ENCODE measurements at regions of chr17 and their contacts with region 1.

Region 1: GRCh38 chr17:77429919-77430752 is 289.4 kb downstream of the SEC14L1 start:
- DNase-seq: peak; percentile 82
- ATAC-seq: peak; percentile 32
- H3K4me3 ChIP-seq: no peak overlapping the region
- H3K4me3 Mint-ChIP-seq: peak overlapping the region; percentile 61
- H3K27ac ChIP-seq: peak overlapping the region in 1 of 2 donors; percentile 43
- H3K27ac Mint-ChIP-seq: peak overlapping the region; percentile 81
- H3K4me1 ChIP-seq: peaks cover 100% of the 10 kb centered on the region in 2 donors
- H3K4me1 Mint-ChIP-seq: peaks cover 86% of the 10 kb centered on the region
- H3K27me3 ChIP-seq: no peaks in the 10 kb centered on the region
- H3K27me3 Mint-ChIP-seq: no peaks in the 10 kb centered on the region
- CTCF ChIP-seq: peak; percentile 87

Region 2: DNA sequence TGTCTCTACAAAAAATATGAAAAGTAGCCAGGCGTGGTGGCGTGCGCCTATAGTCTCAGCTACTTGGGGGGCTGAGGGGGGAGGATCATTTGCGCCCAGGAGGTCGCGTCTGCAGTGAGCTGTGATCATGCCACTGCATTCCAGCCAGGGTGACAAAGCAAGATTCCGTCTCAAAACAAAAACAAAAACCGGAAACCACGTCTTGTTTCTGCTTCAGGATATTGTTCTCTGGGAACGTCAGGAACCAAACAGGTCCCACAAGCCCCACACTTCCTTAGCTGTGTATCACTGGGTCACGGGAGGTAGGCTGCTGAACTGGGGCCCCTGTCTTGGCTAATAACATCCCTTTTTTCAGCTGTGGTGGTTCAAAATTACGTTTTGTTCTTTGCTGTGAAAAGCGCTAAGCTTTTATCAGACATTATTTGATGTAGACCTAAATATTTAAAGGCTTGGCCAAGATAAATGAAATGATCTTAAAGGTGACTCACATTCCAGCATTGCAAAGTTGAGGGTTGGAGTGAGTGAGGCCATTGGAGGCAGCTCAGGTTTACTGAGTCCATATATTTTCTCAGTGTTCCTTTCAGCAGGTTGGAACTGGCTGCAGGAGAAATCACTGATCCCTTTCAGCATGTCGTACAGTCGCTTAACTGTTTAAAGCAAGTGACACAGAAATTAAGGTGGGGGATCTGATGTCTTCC is 305.8 kb before region 1 on chr17:
- CTCF ChIA-PET with region 1: no interaction called
- POLR2A ChIA-PET with region 1: no interaction called
- intact Hi-C with region 1: no loop called
- DNase-seq: no peak
- ATAC-seq: no peak
- H3K4me3 ChIP-seq: no peak overlapping the region
- H3K4me3 Mint-ChIP-seq: no peak overlapping the region
- H3K27ac ChIP-seq: no peak overlapping the region
- H3K27ac Mint-ChIP-seq: no peak overlapping the region
- H3K4me1 ChIP-seq: peaks cover 4 to 8% of the 10 kb centered on the region in 2 donors
- H3K4me1 Mint-ChIP-seq: peaks cover 8% of the 10 kb centered on the region
- H3K27me3 ChIP-seq: peaks cover 0 to 7% (median 0%) of the 10 kb centered on the region in 4 experiments
- H3K27me3 Mint-ChIP-seq: peaks cover 8% of the 10 kb centered on the region
- CTCF ChIP-seq: no peak

Region 3: GRCh38 chr17:77325577-77326075 is 104.5 kb before region 1 on chr17:
- CTCF ChIA-PET with region 1: interaction called, 64 read pairs
- POLR2A ChIA-PET with region 1: interaction called, 6 read pairs
- intact Hi-C with region 1: loop called (anchors 2 kb)
- DNase-seq: no peak
- ATAC-seq: peak; percentile 10
- H3K4me3 ChIP-seq: no peak overlapping the region
- H3K4me3 Mint-ChIP-seq: peak overlapping the region; percentile 93
- H3K27ac ChIP-seq: peak overlapping the region; percentile 82 to 87
- H3K27ac Mint-ChIP-seq: peak overlapping the region; percentile 90
- H3K4me1 ChIP-seq: peaks cover 72 to 94% of the 10 kb centered on the region in 2 donors
- H3K4me1 Mint-ChIP-seq: peaks cover 82% of the 10 kb centered on the region
- H3K27me3 ChIP-seq: no peaks in the 10 kb centered on the region
- H3K27me3 Mint-ChIP-seq: no peaks in the 10 kb centered on the region
- CTCF ChIP-seq: no peak

Region 4: GRCh38 chr17:77410470-77410869 is 19.7 kb before region 1 on chr17:
- CTCF ChIA-PET with region 1: interaction called, 699 read pairs
- POLR2A ChIA-PET with region 1: interaction called, 47 read pairs
- intact Hi-C with region 1: loop called (anchors 1 kb)
- DNase-seq: no peak
- ATAC-seq: no peak
- H3K4me3 ChIP-seq: no peak overlapping the region
- H3K4me3 Mint-ChIP-seq: peak overlapping the region; percentile 40
- H3K27ac ChIP-seq: peak overlapping the region; percentile 7 to 49
- H3K27ac Mint-ChIP-seq: peak overlapping the region; percentile 79
- H3K4me1 ChIP-seq: peaks cover 64 to 78% of the 10 kb centered on the region in 2 donors
- H3K4me1 Mint-ChIP-seq: peaks cover 69% of the 10 kb centered on the region
- H3K27me3 ChIP-seq: no peaks in the 10 kb centered on the region
- H3K27me3 Mint-ChIP-seq: no peaks in the 10 kb centered on the region
- CTCF ChIP-seq: no peak

Region 5: GRCh38 chr17:77451245-77451893 is 21.2 kb after region 1 on chr17:
- CTCF ChIA-PET with region 1: interaction called, 65 read pairs
- POLR2A ChIA-PET with region 1: interaction called, 147 read pairs
- intact Hi-C with region 1: no loop called
- DNase-seq: peak; percentile 70
- ATAC-seq: peak; percentile 59
- H3K4me3 ChIP-seq: peak overlapping the region; percentile 91 to 96 (median 92)
- H3K4me3 Mint-ChIP-seq: peak overlapping the region; percentile 93
- H3K27ac ChIP-seq: peak overlapping the region; percentile 66 to 96
- H3K27ac Mint-ChIP-seq: peak overlapping the region; percentile 96
- H3K4me1 ChIP-seq: peaks cover 67 to 86% of the 10 kb centered on the region in 2 donors
- H3K4me1 Mint-ChIP-seq: peaks cover 69% of the 10 kb centered on the region
- H3K27me3 ChIP-seq: no peaks in the 10 kb centered on the region
- H3K27me3 Mint-ChIP-seq: no peaks in the 10 kb centered on the region
- CTCF ChIP-seq: no peak

Region 6: DNA sequence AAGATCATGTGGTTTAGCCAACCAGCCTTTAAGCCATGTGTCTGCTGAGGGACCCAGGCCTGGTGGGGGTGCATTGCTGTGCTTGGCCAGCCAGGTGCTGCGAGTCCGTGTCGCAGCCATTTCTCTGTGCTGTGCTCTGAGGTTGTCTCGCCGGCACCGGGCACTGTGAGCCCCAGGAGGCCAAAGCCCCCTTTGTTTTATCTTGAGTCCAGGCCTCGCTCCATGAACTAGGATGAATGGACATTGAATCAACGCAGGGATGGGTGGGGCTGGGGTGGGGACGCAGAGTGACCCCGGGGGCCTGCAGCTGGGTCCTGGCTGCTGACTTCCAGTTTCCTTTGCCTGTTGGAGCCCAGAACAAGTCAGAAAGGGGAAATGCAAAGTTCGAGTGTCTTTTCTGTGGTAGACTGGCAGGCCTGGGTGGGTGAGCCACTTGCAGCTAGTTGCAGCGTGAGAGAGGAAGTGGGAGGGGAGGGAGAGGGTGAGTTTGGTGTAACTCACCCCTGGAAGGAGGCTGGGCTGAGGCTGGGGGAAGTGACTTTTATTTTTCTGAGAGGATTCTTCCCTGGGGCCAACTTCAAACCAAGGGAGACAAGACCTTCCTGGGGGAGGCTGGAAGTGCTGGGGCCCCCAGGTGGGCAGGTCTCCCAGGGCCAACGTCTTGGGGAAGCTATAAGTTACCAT is 35.4 kb after region 1 on chr17:
- CTCF ChIA-PET with region 1: interaction called, 18 read pairs
- POLR2A ChIA-PET with region 1: interaction called, 12 read pairs
- intact Hi-C with region 1: loop called (anchors 1 kb)
- DNase-seq: peak; percentile 94
- ATAC-seq: peak; percentile 78
- H3K4me3 ChIP-seq: peak overlapping the region; percentile 12 to 56 (median 38)
- H3K4me3 Mint-ChIP-seq: peak overlapping the region; percentile 81
- H3K27ac ChIP-seq: peak overlapping the region; percentile 55 to 89
- H3K27ac Mint-ChIP-seq: peak overlapping the region; percentile 95
- H3K4me1 ChIP-seq: peaks cover 90 to 98% of the 10 kb centered on the region in 2 donors
- H3K4me1 Mint-ChIP-seq: peaks cover 86% of the 10 kb centered on the region
- H3K27me3 ChIP-seq: no peaks in the 10 kb centered on the region
- H3K27me3 Mint-ChIP-seq: no peaks in the 10 kb centered on the region
- CTCF ChIP-seq: no peak

Region 7: DNA sequence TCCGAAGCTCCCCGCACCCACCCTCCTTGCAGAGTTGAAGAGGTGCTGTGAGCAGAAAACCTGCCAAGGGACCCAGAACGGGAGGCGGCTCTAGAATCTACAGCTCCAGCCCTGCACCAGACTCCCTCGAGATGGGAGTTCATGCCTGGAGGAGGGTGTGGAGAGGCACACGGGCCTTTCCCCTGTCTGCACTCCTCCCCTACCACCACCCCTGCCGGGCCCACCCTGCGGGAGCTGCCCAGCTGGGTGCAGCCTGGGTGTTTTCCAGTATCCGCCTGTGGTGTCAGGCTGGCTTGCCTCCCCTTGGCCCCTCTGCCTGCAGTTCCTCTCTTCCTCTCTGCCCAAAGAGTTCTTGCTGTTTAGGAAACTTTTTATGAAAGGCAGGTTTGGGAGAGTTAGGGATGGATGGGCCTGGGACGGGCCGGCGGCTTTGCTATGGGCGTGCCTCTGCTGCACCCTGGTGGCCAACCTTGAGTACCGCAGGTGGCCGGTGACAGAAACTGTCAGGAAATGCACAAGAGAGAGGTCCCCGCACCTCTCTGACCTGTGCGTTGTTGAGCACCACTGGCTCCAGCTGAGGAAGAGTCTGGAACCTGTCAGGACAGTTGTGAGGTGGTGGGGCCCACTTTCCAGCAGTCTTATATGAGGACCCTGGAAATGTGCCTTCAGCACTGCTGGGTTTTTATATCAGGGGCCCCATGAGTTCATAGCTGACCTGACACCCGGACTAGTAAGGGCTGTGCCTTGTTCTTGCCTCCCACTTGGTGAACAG is 64.7 kb after region 1 on chr17:
- CTCF ChIA-PET with region 1: interaction called, 206 read pairs
- POLR2A ChIA-PET with region 1: interaction called, 24 read pairs
- intact Hi-C with region 1: loop called (anchors 1 kb)
- DNase-seq: peak; percentile 86
- ATAC-seq: peak; percentile 74
- H3K4me3 ChIP-seq: no peak overlapping the region
- H3K4me3 Mint-ChIP-seq: peak overlapping the region; percentile 44
- H3K27ac ChIP-seq: peak overlapping the region; percentile 28
- H3K27ac Mint-ChIP-seq: peak overlapping the region; percentile 90
- H3K4me1 ChIP-seq: peaks cover 14 to 43% of the 10 kb centered on the region in 2 donors
- H3K4me1 Mint-ChIP-seq: peaks cover 32% of the 10 kb centered on the region
- H3K27me3 ChIP-seq: no peaks in the 10 kb centered on the region
- H3K27me3 Mint-ChIP-seq: no peaks in the 10 kb centered on the region
- CTCF ChIP-seq: peak; percentile 98

Region 8: DNA sequence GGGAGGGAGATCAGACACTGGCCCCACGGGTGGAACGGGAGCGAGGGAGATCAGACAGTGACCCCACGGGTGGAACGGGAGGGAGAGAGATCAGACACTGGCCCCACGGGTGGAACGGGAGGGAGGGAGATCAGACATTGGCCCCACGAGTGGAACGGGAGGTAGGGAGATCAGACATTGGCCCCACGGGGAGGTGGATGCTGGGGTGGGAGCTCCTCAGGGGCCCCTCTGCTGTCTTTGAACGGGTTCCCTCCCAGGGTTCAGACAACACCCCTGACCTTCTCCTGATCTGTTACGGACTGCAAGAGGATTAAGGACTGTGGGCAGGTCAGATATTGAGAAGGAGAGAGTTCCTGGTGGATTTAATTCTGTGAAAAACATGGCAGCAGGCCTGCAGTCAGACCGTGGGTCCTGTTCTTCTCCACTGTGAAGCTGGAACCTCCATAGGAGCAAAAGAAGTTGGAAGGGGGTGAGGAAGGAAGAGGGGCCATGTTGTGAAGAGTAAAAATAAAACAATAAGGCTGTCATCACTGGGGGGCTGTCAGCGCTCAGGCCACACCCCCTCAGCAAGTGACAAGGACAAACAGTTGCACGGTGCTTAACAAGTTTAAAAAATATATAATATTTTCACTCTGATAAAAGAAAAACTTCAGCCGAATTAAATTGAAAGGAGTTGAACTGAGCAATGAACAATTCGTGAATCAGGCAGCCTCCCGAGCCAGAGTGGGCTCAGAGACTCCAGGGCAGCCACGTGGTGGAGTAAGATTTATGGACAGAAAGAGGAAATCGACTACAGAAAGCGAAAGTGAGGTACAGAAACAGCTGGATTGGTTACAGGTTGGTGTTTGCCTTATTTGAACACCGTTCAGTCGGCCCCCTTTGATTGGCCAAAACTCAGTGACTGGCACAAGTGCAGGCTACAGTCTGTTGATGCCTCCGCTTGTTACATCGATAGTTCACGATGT is 179.7 kb after region 1 on chr17:
- CTCF ChIA-PET with region 1: no interaction called
- POLR2A ChIA-PET with region 1: no interaction called
- intact Hi-C with region 1: no loop called
- DNase-seq: peak; percentile 82
- ATAC-seq: peak; percentile 95
- H3K4me3 ChIP-seq: peak overlapping the region; percentile 21 to 59 (median 45)
- H3K4me3 Mint-ChIP-seq: peak overlapping the region; percentile 93
- H3K27ac ChIP-seq: peak overlapping the region; percentile 36 to 54
- H3K27ac Mint-ChIP-seq: peak overlapping the region; percentile 89
- H3K4me1 ChIP-seq: peaks cover 15 to 22% of the 10 kb centered on the region in 2 donors
- H3K4me1 Mint-ChIP-seq: peaks cover 27% of the 10 kb centered on the region
- H3K27me3 ChIP-seq: no peaks in the 10 kb centered on the region
- H3K27me3 Mint-ChIP-seq: peaks cover 11% of the 10 kb centered on the region
- CTCF ChIP-seq: no peak